ENCODE measurements at regions of chr1 and their contacts with region 1.

Region 1: DNA sequence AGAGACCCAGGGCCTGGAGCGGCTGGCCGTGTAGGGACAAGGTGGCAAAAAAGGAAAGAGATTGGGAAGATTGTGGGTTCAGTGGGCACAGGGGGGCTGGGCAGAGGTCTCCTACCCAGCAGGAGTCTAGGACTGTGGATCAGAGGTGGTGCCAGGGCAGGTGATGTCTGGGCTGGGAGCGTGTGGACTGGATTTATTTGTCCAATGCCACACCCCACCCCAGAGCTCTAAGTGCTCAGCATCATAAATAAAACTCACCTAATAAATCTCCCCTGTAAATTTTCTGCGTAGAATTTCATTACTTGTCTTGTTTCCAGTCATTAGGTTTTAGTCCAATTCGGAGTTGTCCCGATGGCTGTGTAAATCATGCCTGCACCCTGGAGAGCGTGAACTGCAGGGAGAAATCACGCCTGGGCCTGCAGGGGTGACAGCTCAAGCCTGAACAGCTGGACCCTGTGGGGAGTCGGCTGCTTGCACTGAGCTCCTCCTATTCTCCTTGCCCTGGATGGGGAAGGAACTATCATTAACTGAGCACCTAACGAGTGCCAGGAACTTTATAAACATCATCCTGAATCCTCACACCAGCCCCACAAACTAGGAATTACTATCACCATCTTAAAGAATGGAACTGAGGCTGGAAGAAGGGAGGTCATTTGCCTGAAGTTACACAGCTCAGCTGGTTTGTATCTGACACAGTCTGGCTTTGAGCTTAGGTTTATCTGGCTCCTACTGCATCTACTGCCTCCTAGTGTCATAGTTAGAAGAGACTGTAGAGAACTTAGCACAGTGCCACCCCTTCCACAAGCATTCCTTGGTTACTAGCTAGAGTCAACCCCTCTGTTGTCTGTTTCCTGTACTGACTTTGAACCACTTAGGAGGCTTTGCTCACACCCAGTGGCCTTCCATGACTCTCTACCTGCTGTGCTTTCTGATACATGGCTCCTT is 25.0 kb upstream of the POU3F1 start:
- DNase-seq: no peak
- ATAC-seq: peak; percentile 93
- H3K4me3 ChIP-seq: no peak overlapping the region
- H3K27ac ChIP-seq: no peak overlapping the region
- H3K4me1 ChIP-seq: no peaks in the 10 kb centered on the region
- H3K27me3 ChIP-seq: no peaks in the 10 kb centered on the region
- CTCF ChIP-seq: peak; percentile 51 to 58 (median 58); a peak in 5 of 6 replicates
- EP300 ChIP-seq: no peak
- POLR2A ChIP-seq: no peak
- RAD21 ChIP-seq: peak; percentile 66

Region 2: GRCh38 chr1:38018864-38019343 is 52.7 kb before region 1 on chr1:
- CTCF ChIA-PET with region 1: interaction called, 252 read pairs
- POLR2A ChIA-PET with region 1: no interaction called
- RAD21 ChIA-PET with region 1: interaction called, 173 read pairs
- SMC1A ChIA-PET with region 1: interaction called, 77 read pairs
- in situ Hi-C with region 1: no loop called
- intact Hi-C with region 1: no loop called
- DNase-seq: no peak
- ATAC-seq: peak; percentile 71
- H3K4me3 ChIP-seq: no peak overlapping the region
- H3K27ac ChIP-seq: no peak overlapping the region
- H3K4me1 ChIP-seq: no peaks in the 10 kb centered on the region
- H3K27me3 ChIP-seq: no peaks in the 10 kb centered on the region
- CTCF ChIP-seq: peak; percentile 47 to 69 (median 54); a peak in 4 of 6 replicates
- EP300 ChIP-seq: no peak
- POLR2A ChIP-seq: no peak
- RAD21 ChIP-seq: peak; percentile 62

Region 3: GRCh38 chr1:38037221-38037939 is 34.2 kb before region 1 on chr1:
- CTCF ChIA-PET with region 1: interaction called, 179 read pairs
- POLR2A ChIA-PET with region 1: interaction called, 5 read pairs
- RAD21 ChIA-PET with region 1: interaction called, 123 read pairs
- SMC1A ChIA-PET with region 1: interaction called, 316 read pairs
- in situ Hi-C with region 1: no loop called
- intact Hi-C with region 1: no loop called
- DNase-seq: no peak
- ATAC-seq: peak; percentile 36; the same call in 2 of the 3 replicates
- H3K4me3 ChIP-seq: no peak overlapping the region
- H3K27ac ChIP-seq: no peak overlapping the region
- H3K4me1 ChIP-seq: no peaks in the 10 kb centered on the region
- H3K27me3 ChIP-seq: no peaks in the 10 kb centered on the region; a peak in 1 of 4 replicates
- CTCF ChIP-seq: peak in 2 of 3 experiments; percentile 11 to 47; a peak in 2 of 6 replicates
- EP300 ChIP-seq: no peak
- POLR2A ChIP-seq: no peak
- RAD21 ChIP-seq: peak; percentile 57

Region 4: GRCh38 chr1:38052750-38053410 is 18.7 kb before region 1 on chr1:
- CTCF ChIA-PET with region 1: interaction called, 92 read pairs
- POLR2A ChIA-PET with region 1: interaction called, 13 read pairs
- RAD21 ChIA-PET with region 1: interaction called, 73 read pairs
- SMC1A ChIA-PET with region 1: interaction called, 316 read pairs
- in situ Hi-C with region 1: no loop called
- intact Hi-C with region 1: no loop called
- DNase-seq: peak; percentile 58
- ATAC-seq: peak; percentile 85
- H3K4me3 ChIP-seq: no peak overlapping the region
- H3K27ac ChIP-seq: no peak overlapping the region
- H3K4me1 ChIP-seq: peaks cover 29% of the 10 kb centered on the region
- H3K27me3 ChIP-seq: no peaks in the 10 kb centered on the region
- CTCF ChIP-seq: no peak
- EP300 ChIP-seq: peak; percentile 54 to 71; a peak in 2 of 4 replicates
- POLR2A ChIP-seq: no peak
- RAD21 ChIP-seq: no peak

Region 5: DNA sequence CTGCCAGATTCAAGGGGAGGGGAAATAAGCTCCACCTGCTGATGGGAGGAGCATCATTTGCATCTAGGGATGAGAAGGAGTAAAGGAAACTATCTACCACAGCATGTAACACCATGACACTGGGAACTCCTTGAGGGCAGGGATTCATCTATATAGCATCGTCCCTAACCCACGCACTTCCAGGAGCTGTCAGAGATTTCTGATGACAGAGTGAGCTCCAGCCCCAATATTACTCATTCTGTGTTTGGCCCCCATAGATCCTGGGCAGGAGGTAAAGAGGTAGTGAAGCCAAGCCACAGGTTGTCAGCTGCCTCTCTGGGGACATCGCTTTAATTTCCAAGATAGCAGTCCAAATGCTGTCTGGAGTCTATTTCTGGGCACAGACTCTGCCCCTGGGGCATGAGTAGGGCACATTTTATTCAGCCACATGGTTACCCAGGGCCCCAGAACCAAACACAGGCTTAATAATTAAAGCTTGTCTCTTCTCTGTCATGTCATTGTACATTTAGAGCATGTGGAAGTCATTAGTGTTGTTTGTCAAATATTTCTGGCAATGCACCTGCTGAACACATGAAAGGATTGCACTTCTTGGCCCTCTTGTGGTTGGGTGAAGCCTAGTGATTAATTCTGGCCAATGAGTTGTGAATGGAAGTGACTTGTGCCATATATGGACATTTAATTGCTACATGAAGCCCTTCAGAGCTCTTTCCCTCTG is 80.9 kb after region 1 on chr1:
- CTCF ChIA-PET with region 1: interaction called, 10 read pairs
- POLR2A ChIA-PET with region 1: no interaction called
- RAD21 ChIA-PET with region 1: interaction called, 21 read pairs
- SMC1A ChIA-PET with region 1: interaction called, 27 read pairs
- in situ Hi-C with region 1: no loop called
- intact Hi-C with region 1: no loop called
- DNase-seq: peak; percentile 51
- ATAC-seq: peak; percentile 85
- H3K4me3 ChIP-seq: no peak overlapping the region
- H3K27ac ChIP-seq: no peak overlapping the region
- H3K4me1 ChIP-seq: peaks cover 11% of the 10 kb centered on the region
- H3K27me3 ChIP-seq: no peaks in the 10 kb centered on the region
- CTCF ChIP-seq: peak in 2 of 3 experiments; percentile 14 to 22; a peak in 1 of 6 replicates
- EP300 ChIP-seq: no peak
- POLR2A ChIP-seq: no peak
- RAD21 ChIP-seq: no peak

Region 6: DNA sequence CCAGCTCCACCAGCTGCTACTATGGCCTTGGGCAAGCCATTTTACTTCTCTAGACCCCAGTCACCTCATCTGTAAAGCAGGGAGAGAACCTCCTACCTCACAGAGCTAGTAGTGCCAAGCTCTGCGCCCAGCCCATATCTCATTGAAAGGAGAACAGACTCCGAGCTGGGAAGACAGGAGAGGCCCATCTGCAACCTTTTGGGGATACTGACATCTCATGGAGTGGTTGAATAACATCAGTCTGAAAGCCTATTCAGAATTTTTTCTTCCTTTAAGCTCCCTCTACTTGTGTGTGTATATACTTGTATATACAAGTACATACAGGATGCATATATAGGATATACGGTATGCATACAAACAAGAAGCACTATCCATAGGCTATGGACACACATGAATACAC is 254.6 kb after region 1 on chr1:
- CTCF ChIA-PET with region 1: interaction called, 6 read pairs
- POLR2A ChIA-PET with region 1: no interaction called
- RAD21 ChIA-PET with region 1: no interaction called
- SMC1A ChIA-PET with region 1: interaction called, 10 read pairs
- in situ Hi-C with region 1: no loop called
- intact Hi-C with region 1: no loop called
- DNase-seq: no peak
- ATAC-seq: no peak
- H3K4me3 ChIP-seq: no peak overlapping the region
- H3K27ac ChIP-seq: no peak overlapping the region
- H3K4me1 ChIP-seq: no peaks in the 10 kb centered on the region
- H3K27me3 ChIP-seq: no peaks in the 10 kb centered on the region; a peak in 3 of 4 replicates
- CTCF ChIP-seq: 0 out of 6 replicates have a peak, but pooled peaks of 1 of the 3 experiments have one; percentile 3
- EP300 ChIP-seq: no peak
- POLR2A ChIP-seq: no peak
- RAD21 ChIP-seq: 0 out of 2 replicates have a peak, but pooled peaks have one; percentile 9

Region 7: GRCh38 chr1:38586993-38587646 is 515.5 kb after region 1 on chr1:
- CTCF ChIA-PET with region 1: interaction called, 19 read pairs
- POLR2A ChIA-PET with region 1: no interaction called
- RAD21 ChIA-PET with region 1: interaction called, 6 read pairs
- SMC1A ChIA-PET with region 1: no interaction called
- in situ Hi-C with region 1: no loop called
- intact Hi-C with region 1: no loop called
- DNase-seq: peak; percentile 17
- ATAC-seq: peak; percentile 91
- H3K4me3 ChIP-seq: no peak overlapping the region
- H3K27ac ChIP-seq: no peak overlapping the region
- H3K4me1 ChIP-seq: peaks cover 3% of the 10 kb centered on the region; the same call in 1 of the 2 replicates
- H3K27me3 ChIP-seq: 0 out of 4 replicates have a peak, but pooled peaks cover 0 to 1% of the 10 kb centered on the region in 2 experiments
- CTCF ChIP-seq: peak; percentile 92 to 99 (median 97)
- EP300 ChIP-seq: no peak
- POLR2A ChIP-seq: no peak
- RAD21 ChIP-seq: peak; percentile 96

Measured in GM12878 (cell line).